ENCODE measurements at regions of chr15 and their contacts with region 1.

Region 1: DNA sequence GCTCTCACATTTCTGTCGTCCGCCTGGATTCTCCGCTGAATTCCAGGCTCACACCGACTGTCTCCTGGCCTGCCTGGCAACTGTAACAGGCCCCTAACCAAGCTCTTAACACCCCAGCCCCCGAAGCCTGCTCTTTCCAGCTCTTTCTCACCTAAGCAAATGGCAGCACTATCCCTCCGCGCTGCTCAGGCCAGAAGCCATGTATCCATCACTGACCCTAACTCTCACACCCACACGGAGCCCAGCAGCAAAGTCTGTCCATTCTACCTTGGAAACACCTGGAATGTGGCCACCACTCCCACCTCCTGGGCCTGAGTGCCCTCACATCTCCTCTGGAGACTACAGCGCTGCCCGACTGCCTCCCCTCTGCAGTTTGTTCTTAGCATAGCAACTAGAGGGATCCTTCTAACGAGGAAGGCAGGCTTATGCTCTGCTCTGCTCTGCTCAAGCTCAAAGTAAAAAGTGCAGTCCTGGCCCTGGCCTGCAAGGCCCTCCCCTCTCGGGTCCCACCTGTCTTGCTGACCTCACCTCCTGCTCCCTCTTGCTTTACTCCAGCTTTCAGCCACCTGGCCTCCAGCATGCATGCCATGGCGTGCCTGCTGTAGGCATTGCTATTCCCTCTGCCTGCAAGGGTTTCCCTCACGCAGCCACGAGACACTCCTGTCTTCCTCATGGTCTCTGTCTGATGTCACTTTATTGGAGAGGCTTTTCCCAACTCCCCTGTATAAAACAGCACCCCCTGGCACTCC is 27.2 kb downstream of the FEM1B start:
- DNase-seq: no peak
- H3K4me3 ChIP-seq: no peak overlapping the region
- H3K27ac ChIP-seq: no peak overlapping the region
- H3K4me1 ChIP-seq: peaks cover 5% of the 10 kb centered on the region
- CTCF ChIP-seq: no peak

Region 2: GRCh38 chr15:68126396-68126795 is 178.4 kb before region 1 on chr15:
- CTCF ChIA-PET with region 1: no interaction called
- POLR2A ChIA-PET with region 1: no interaction called
- intact Hi-C with region 1: no loop called
- DNase-seq: no peak
- H3K4me3 ChIP-seq: no peak overlapping the region
- H3K27ac ChIP-seq: no peak overlapping the region
- H3K4me1 ChIP-seq: no peaks in the 10 kb centered on the region
- CTCF ChIP-seq: no peak

Region 3: DNA sequence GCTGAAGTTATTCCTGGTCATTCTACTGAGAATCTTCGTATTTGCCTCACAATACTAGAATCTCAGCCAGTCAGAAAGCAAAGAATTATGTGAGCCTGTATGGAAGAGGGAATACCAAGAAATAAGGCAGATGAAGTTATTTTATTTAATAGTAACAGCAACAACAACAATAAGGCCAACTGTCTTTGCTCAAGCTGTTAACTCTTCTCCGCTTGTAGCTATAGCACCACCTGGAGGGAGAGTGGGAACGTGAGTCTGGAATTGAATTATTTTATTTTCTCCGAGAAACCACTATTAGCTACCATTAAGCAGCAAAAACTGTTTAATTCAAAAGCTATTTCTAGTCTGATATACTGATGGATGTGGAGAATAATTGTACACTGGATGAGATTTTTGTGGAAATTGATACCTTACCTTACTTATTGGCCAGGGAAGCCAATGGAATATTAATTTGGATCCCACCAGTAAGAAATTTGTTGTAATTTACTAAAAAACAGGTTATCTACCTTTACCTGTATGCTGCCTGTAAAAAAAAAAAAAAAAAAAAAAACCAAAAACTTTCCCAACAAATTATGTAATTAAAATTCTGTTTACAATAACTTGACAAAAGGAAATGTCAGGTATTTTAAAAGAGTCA is 149.7 kb before region 1 on chr15:
- CTCF ChIA-PET with region 1: no interaction called
- POLR2A ChIA-PET with region 1: no interaction called
- intact Hi-C with region 1: no loop called
- DNase-seq: peak; percentile 72
- H3K4me3 ChIP-seq: no peak overlapping the region
- H3K27ac ChIP-seq: peak overlapping the region; percentile 16
- H3K4me1 ChIP-seq: peaks cover 8% of the 10 kb centered on the region
- CTCF ChIP-seq: peak; percentile 96

Region 4: GRCh38 chr15:68322796-68323195 is 18.0 kb after region 1 on chr15:
- CTCF ChIA-PET with region 1: no interaction called
- POLR2A ChIA-PET with region 1: no interaction called
- intact Hi-C with region 1: no loop called
- DNase-seq: no peak
- H3K4me3 ChIP-seq: no peak overlapping the region
- H3K27ac ChIP-seq: no peak overlapping the region
- H3K4me1 ChIP-seq: no peaks in the 10 kb centered on the region
- CTCF ChIP-seq: no peak

Region 5: DNA sequence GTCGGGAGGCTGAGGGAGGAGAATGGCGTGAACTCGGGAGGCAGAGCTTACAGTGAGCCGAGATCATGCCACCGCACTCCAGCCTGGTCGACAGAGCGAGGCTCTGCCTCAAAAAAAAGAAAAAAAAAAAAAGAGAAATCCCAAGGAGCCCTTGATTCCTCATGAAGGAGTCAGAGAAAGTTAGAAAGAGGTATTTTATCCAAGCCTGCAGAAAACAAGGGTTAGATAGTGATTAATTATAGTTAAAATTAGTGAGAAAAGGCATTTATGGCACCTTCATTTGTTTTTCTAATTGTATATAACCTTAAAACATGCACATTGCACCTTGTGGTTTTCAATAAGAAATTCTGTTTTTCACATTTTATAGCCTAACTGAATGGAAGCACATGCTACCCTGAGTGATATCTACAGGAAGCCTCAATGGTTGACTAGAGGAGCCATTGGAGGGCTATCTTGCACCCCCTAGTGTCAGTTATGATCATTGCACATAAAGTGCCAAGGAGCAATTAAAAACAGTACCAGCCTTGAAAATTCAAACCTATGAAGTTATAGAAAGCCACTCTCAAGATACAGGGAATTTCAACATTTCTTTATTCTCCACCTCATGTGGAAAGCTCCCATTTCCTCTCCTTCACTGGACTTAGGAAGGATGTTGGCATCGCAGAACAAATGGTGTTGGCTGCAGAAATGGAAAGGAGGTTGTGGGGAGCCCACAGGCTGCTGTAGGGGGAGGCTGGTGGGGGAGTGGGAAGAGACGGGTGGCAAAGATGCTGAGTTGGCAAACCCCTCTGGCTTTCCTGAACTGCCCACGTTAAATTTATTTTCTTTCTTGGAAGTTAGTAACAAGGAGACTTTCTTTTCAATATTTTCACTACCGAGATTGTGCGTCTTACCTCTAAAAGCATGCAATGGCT is 78.7 kb after region 1 on chr15:
- CTCF ChIA-PET with region 1: no interaction called
- POLR2A ChIA-PET with region 1: no interaction called
- intact Hi-C with region 1: loop called (anchors 1 kb)
- DNase-seq: peak; percentile 63
- H3K4me3 ChIP-seq: no peak overlapping the region
- H3K27ac ChIP-seq: no peak overlapping the region
- H3K4me1 ChIP-seq: peaks cover 10% of the 10 kb centered on the region
- CTCF ChIP-seq: peak; percentile 90

Region 6: GRCh38 chr15:68538291-68538690 is 233.5 kb after region 1 on chr15:
- CTCF ChIA-PET with region 1: no interaction called
- POLR2A ChIA-PET with region 1: no interaction called
- intact Hi-C with region 1: loop called (anchors 2 kb)
- DNase-seq: no peak
- H3K4me3 ChIP-seq: no peak overlapping the region
- H3K27ac ChIP-seq: no peak overlapping the region
- H3K4me1 ChIP-seq: no peaks in the 10 kb centered on the region
- CTCF ChIP-seq: no peak